Common myeloid progenitor, CD34-positive (primary cell): ENCODE measurements at regions of chr12 and their contacts with region 1.

Region 1: GRCh38 chr12:52879394-52880351 is 25.2 kb downstream of the KRT8 start:
- DNase-seq: peak; percentile 74 to 85 (median 82)
- H3K4me3 ChIP-seq: peak overlapping the region in 4 of 7 experiments; percentile 47 to 77 (median 52)
- H3K27ac ChIP-seq: no peak overlapping the region
- H3K4me1 ChIP-seq: peaks cover 0 to 31% (median 18%) of the 10 kb centered on the region in 4 experiments
- H3K27me3 ChIP-seq: no peaks in the 10 kb centered on the region

Region 2: GRCh38 chr12:52372216-52373154 is 507.2 kb before region 1 on chr12:
- CTCF ChIA-PET with region 1: interaction called, 122 read pairs
- POLR2A ChIA-PET with region 1: interaction called, 3 read pairs
- DNase-seq: peak; percentile 78 to 90 (median 86)
- H3K4me3 ChIP-seq: no peak overlapping the region
- H3K27ac ChIP-seq: no peak overlapping the region
- H3K4me1 ChIP-seq: no peaks in the 10 kb centered on the region
- H3K27me3 ChIP-seq: peaks cover 0 to 7% (median 5%) of the 10 kb centered on the region in 5 experiments

Region 3: GRCh38 chr12:52582971-52583456 is 296.7 kb before region 1 on chr12:
- CTCF ChIA-PET with region 1: interaction called, 467 read pairs
- POLR2A ChIA-PET with region 1: no interaction called
- DNase-seq: peak; percentile 58 to 82 (median 70)
- H3K4me3 ChIP-seq: no peak overlapping the region
- H3K27ac ChIP-seq: no peak overlapping the region
- H3K4me1 ChIP-seq: peaks cover 0 to 13% (median 3%) of the 10 kb centered on the region in 4 experiments
- H3K27me3 ChIP-seq: peaks cover 0 to 13% (median 0%) of the 10 kb centered on the region in 5 experiments

Region 4: DNA sequence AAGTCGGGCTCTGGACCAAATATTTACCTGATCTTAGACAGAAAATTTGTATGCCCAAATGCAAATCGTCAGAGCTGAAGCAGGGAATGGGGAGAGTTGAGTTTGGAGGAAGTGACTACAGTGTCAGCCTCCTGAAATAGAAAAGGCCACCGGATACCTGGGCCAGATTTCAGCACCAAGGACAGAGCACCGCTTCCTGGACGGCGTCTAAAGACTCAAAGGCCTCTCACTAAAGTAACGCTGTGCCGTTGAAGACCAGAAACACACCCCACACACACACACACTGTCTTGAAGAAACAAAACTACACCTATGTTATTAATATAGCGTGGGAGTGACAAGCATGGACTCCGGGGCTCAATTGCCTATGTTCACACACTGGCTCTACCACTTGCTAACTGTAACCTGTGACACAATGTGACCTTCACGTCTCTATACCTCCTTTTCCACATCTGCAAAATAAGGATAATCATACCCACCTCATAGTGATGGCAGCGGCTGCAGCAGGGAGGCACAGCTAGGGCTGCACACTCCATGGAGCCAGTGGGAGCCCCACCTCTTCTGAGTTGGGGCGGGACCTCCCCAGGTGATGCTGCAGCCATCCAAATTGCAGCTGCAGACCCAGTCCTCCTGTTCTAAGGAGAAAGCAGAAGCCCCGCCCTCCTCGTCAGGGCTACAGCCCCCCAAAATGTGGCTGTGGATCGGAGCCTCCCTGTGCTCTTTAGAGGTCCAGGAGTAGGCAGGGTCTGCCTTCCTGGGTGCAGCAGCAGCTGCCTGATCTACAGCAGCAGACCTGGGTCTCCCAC is 138.1 kb before region 1 on chr12:
- CTCF ChIA-PET with region 1: no interaction called
- POLR2A ChIA-PET with region 1: no interaction called
- DNase-seq: peak; percentile 60 to 88 (median 82)
- H3K4me3 ChIP-seq: no peak overlapping the region
- H3K27ac ChIP-seq: no peak overlapping the region
- H3K4me1 ChIP-seq: no peaks in the 10 kb centered on the region
- H3K27me3 ChIP-seq: peaks cover 0 to 26% (median 2%) of the 10 kb centered on the region in 5 experiments

Region 5: GRCh38 chr12:52895061-52895887 is 15.6 kb after region 1 on chr12:
- CTCF ChIA-PET with region 1: interaction called, 47 read pairs
- POLR2A ChIA-PET with region 1: no interaction called
- DNase-seq: no peak
- H3K4me3 ChIP-seq: no peak overlapping the region
- H3K27ac ChIP-seq: no peak overlapping the region
- H3K4me1 ChIP-seq: no peaks in the 10 kb centered on the region
- H3K27me3 ChIP-seq: no peaks in the 10 kb centered on the region

Region 6: GRCh38 chr12:52949413-52950331 is 70.0 kb after region 1 on chr12:
- CTCF ChIA-PET with region 1: interaction called, 47 read pairs
- POLR2A ChIA-PET with region 1: no interaction called
- DNase-seq: peak in 2 of 3 donors; percentile 48 to 61
- H3K4me3 ChIP-seq: peak overlapping the region in 6 of 7 experiments; percentile 5 to 84 (median 67)
- H3K27ac ChIP-seq: peak overlapping the region; percentile 33 to 83
- H3K4me1 ChIP-seq: peaks cover 0 to 20% (median 3%) of the 10 kb centered on the region in 4 experiments
- H3K27me3 ChIP-seq: peaks cover 0 to 12% (median 0%) of the 10 kb centered on the region in 5 experiments

Region 7: DNA sequence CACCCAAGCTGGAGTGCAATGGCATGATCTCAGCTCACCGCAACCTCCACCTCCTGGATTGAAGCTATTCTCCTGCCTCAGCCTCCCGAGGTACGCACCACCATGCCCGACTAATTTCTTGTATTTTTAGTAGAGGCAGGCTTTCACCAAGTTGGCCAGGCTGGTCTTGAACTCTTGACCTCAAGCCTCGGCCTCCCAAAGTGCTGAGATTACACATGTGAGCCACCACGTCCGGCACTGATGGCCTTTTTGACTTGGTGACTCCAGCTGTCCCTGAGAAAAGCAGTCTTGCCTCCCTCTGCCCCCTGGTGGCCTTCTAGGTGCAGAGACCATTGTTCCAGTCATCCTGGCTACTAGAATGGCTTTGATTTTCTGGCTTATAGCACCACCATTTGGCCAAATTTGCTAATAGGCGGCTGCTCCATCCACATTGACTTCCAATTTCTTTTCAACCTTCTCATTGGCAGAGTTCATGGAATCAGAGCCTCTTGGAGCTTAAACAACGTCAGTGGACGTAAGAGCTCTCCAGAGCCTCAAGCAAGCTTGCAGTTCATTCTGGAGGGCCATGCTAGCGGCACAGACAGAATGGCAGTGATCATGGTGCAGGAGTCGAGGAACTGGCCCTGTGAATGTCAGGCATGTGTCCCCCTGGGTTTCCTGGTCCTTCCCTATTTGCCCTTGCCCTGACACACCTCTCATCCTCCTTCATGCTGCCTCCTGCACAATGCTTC is 101.2 kb after region 1 on chr12:
- CTCF ChIA-PET with region 1: interaction called, 450 read pairs
- POLR2A ChIA-PET with region 1: no interaction called
- DNase-seq: peak; percentile 89 to 95 (median 90)
- H3K4me3 ChIP-seq: no peak overlapping the region
- H3K27ac ChIP-seq: no peak overlapping the region
- H3K4me1 ChIP-seq: no peaks in the 10 kb centered on the region
- H3K27me3 ChIP-seq: peaks cover 0 to 2% (median 0%) of the 10 kb centered on the region in 5 experiments